ENCODE measurements at regions of chr5 and their contacts with region 1.

Region 1: GRCh38 chr5:79235634-79236363 is at the start of gene JMY:
- DNase-seq: peak; percentile 92
- ATAC-seq: peak; percentile 77
- H3K4me3 ChIP-seq: peak within 1 kb of the TSS; percentile 69 to 84 (median 77)
- H3K4me3 Mint-ChIP-seq: peak within 1 kb of the TSS; percentile 96
- H3K27ac ChIP-seq: peak within 1 kb of the TSS; percentile 86 to 87
- H3K27ac Mint-ChIP-seq: peak within 1 kb of the TSS; percentile 89
- H3K4me1 ChIP-seq: peaks cover 19 to 33% of the 10 kb centered on the region in 2 donors
- H3K4me1 Mint-ChIP-seq: peaks cover 30% of the 10 kb centered on the region
- H3K27me3 ChIP-seq: no peaks in the 10 kb centered on the region
- H3K27me3 Mint-ChIP-seq: no peaks in the 10 kb centered on the region
- CTCF ChIP-seq: no peak
- total RNA-seq, gene JMY: 20.4 and 20.5 TPM in 2 replicates

Region 2: DNA sequence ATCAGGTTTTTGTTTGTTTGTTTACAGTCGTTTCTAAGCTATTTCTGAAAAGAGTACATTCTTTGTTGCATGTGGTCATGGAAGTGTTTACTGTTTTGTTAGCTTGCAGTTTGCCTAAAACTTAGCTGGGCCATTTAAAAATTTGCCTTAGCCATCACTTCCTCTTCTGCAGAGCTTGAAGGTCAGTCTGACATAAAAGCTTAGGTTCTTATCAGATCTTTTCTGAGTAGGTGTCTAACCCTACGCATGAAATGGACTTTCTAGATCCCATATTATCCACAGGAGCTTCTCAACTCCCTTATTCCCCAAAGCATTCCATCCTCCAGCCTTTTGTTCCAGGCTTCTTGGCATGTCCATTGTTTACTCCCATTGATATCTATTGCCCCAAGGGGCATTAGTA is 1031.6 kb before region 1 on chr5:
- CTCF ChIA-PET with region 1: no interaction called
- POLR2A ChIA-PET with region 1: no interaction called
- intact Hi-C with region 1: no loop called
- DNase-seq: no peak
- ATAC-seq: no peak
- H3K4me3 ChIP-seq: no peak overlapping the region
- H3K4me3 Mint-ChIP-seq: no peak overlapping the region
- H3K27ac ChIP-seq: no peak overlapping the region
- H3K27ac Mint-ChIP-seq: no peak overlapping the region
- H3K4me1 ChIP-seq: no peaks in the 10 kb centered on the region
- H3K4me1 Mint-ChIP-seq: no peaks in the 10 kb centered on the region
- H3K27me3 ChIP-seq: no peaks in the 10 kb centered on the region
- H3K27me3 Mint-ChIP-seq: no peaks in the 10 kb centered on the region
- CTCF ChIP-seq: no peak

Region 3: DNA sequence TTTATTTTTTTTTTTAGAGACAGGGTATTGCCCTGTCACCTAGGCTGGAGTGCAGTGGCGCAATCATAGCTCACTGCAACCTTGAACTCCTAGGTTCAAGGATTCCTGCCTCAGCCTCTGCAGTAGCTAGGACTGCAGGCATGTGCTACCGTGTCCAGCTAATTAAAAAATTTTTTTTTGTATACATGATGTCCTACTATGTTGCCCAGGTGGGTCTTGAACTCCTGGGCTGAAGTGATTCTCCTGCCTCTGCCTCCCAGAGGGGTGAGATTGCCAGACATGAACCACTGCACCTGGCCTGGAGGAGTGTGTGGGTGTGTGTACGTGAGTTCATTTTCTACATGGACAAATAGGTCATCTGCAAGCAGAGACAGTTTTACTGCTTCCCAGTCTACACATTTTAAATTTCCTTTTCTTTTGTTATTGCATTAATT is 34.0 kb after region 1 on chr5:
- CTCF ChIA-PET with region 1: no interaction called
- POLR2A ChIA-PET with region 1: no interaction called
- intact Hi-C with region 1: loop called (anchors 2 kb)
- DNase-seq: no peak
- ATAC-seq: no peak
- H3K4me3 ChIP-seq: no peak overlapping the region
- H3K4me3 Mint-ChIP-seq: no peak overlapping the region
- H3K27ac ChIP-seq: no peak overlapping the region
- H3K27ac Mint-ChIP-seq: no peak overlapping the region
- H3K4me1 ChIP-seq: no peaks in the 10 kb centered on the region
- H3K4me1 Mint-ChIP-seq: peaks cover 12% of the 10 kb centered on the region
- H3K27me3 ChIP-seq: no peaks in the 10 kb centered on the region
- H3K27me3 Mint-ChIP-seq: no peaks in the 10 kb centered on the region
- CTCF ChIP-seq: no peak